IMR-90 (cell line): ENCODE measurements at regions of chr11 and their contacts with region 1.

Region 1: DNA sequence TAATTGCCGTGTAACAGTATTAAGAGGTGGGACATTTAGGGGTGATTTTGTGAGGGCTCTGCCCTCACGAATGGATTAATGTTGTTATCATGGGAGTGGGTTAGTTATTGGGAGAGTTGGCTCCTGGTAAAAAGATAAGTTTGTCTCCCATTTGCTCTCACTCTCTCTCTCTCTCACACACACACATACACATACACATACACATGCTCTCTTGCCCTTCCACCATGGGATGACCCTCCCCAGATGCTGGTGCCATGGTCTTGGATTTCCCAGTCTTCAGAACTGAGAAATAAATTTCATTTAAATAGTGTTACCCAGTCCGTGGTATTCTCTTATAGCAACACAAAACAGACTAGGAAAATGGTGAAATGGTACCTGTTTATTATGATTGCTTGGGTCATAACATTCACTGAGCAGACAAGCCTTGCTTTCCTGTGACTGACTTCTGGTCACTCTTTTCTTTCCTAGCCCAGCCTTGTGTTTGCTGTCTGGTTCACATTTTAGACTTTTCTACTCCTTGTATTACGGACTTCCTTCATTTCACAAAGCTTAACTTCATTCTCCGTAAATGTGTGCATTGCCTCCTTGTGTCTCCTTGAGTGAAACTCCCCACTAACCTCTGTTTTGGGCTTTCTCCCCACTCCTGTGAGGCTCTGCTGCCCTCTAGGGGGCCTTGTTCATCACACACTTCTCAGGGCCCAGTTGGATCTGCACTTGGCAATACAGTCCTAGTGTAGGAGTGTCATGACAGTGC is 206.5 kb upstream of the CTSC start:
- DNase-seq: peak; percentile 91
- ATAC-seq: peak; percentile 100
- H3K4me3 ChIP-seq: no peak overlapping the region
- H3K27ac ChIP-seq: peak overlapping the region; percentile 28; the same call in 1 of the 2 replicates
- H3K4me1 ChIP-seq: peaks cover 2% of the 10 kb centered on the region; the same call in 1 of the 2 replicates
- H3K27me3 ChIP-seq: no peaks in the 10 kb centered on the region
- CTCF ChIP-seq: peak; percentile 100; the same call in 1 of the 2 replicates
- POLR2A ChIP-seq: peak; percentile 62; the same call in 1 of the 2 replicates
- RAD21 ChIP-seq: peak; percentile 100

Region 2: GRCh38 chr11:87463486-87464102 is 1080.5 kb before region 1 on chr11:
- CTCF ChIA-PET with region 1: no interaction called
- POLR2A ChIA-PET with region 1: no interaction called
- dilution Hi-C with region 1: no loop called
- in situ Hi-C with region 1: no loop called
- intact Hi-C with region 1: loop called (anchors 10 kb)
- DNase-seq: peak; percentile 36
- ATAC-seq: 0 out of 2 replicates have a peak, but pooled peaks have one; percentile 51
- H3K4me3 ChIP-seq: no peak overlapping the region
- H3K27ac ChIP-seq: no peak overlapping the region
- H3K4me1 ChIP-seq: no peaks in the 10 kb centered on the region
- H3K27me3 ChIP-seq: no peaks in the 10 kb centered on the region
- CTCF ChIP-seq: peak; percentile 47
- POLR2A ChIP-seq: no peak
- RAD21 ChIP-seq: peak; percentile 60

Region 3: DNA sequence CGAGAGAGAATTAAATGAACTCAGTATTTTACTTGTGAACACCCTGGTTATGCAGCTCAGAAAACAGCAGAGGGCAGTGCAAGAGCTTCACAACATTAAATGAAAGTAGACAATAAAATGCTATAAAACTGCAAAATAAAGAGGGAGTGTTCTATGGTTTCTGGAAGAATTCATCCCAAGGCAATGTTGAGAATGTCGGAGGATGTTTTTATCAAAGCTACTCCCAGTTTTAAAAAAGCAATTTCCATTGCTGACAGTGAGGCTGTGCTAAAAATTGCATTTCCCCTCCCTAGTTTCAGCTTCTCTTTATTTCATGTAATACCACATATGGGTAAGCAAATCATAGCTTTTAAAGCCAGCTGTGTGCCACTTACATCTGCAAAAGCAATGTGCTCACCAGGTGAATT is 665.7 kb before region 1 on chr11:
- CTCF ChIA-PET with region 1: interaction called, 5 read pairs
- POLR2A ChIA-PET with region 1: no interaction called
- dilution Hi-C with region 1: no loop called
- in situ Hi-C with region 1: no loop called
- intact Hi-C with region 1: loop called (anchors 1 kb)
- DNase-seq: peak; percentile 57
- ATAC-seq: peak; percentile 72
- H3K4me3 ChIP-seq: no peak overlapping the region
- H3K27ac ChIP-seq: no peak overlapping the region
- H3K4me1 ChIP-seq: no peaks in the 10 kb centered on the region
- H3K27me3 ChIP-seq: no peaks in the 10 kb centered on the region
- CTCF ChIP-seq: peak; percentile 58
- POLR2A ChIP-seq: no peak
- RAD21 ChIP-seq: peak; percentile 57

Region 4: GRCh38 chr11:88103337-88104206 is 440.5 kb before region 1 on chr11:
- CTCF ChIA-PET with region 1: interaction called, 4 read pairs
- POLR2A ChIA-PET with region 1: no interaction called
- dilution Hi-C with region 1: no loop called
- in situ Hi-C with region 1: no loop called
- intact Hi-C with region 1: loop called (anchors 1 kb)
- DNase-seq: peak; percentile 58
- ATAC-seq: peak; percentile 61
- H3K4me3 ChIP-seq: no peak overlapping the region
- H3K27ac ChIP-seq: no peak overlapping the region
- H3K4me1 ChIP-seq: no peaks in the 10 kb centered on the region
- H3K27me3 ChIP-seq: no peaks in the 10 kb centered on the region
- CTCF ChIP-seq: peak; percentile 56
- POLR2A ChIP-seq: no peak
- RAD21 ChIP-seq: peak; percentile 48; the same call in 1 of the 2 replicates

Region 5: GRCh38 chr11:88231894-88232482 is 312.1 kb before region 1 on chr11:
- CTCF ChIA-PET with region 1: interaction called, 3 read pairs
- POLR2A ChIA-PET with region 1: no interaction called
- dilution Hi-C with region 1: no loop called
- in situ Hi-C with region 1: no loop called
- intact Hi-C with region 1: loop called (anchors 1 kb)
- DNase-seq: peak; percentile 40
- ATAC-seq: peak; percentile 84
- H3K4me3 ChIP-seq: no peak overlapping the region
- H3K27ac ChIP-seq: no peak overlapping the region
- H3K4me1 ChIP-seq: no peaks in the 10 kb centered on the region
- H3K27me3 ChIP-seq: no peaks in the 10 kb centered on the region
- CTCF ChIP-seq: peak; percentile 56
- POLR2A ChIP-seq: no peak
- RAD21 ChIP-seq: peak; percentile 61

Region 6: GRCh38 chr11:88337181-88337986 is 206.7 kb before region 1 on chr11 and contains the start of gene CTSC:
- CTCF ChIA-PET with region 1: no interaction called
- POLR2A ChIA-PET with region 1: interaction called, 3 read pairs
- dilution Hi-C with region 1: no loop called
- in situ Hi-C with region 1: no loop called
- intact Hi-C with region 1: loop called (anchors 1 kb)
- DNase-seq: peak; percentile 87
- ATAC-seq: peak; percentile 90
- H3K4me3 ChIP-seq: peak within 1 kb of the TSS; percentile 96
- H3K27ac ChIP-seq: peak within 1 kb of the TSS; percentile 98
- H3K4me1 ChIP-seq: peaks cover 2% of the 10 kb centered on the region
- H3K27me3 ChIP-seq: no peaks in the 10 kb centered on the region
- CTCF ChIP-seq: peak; percentile 23; the same call in 1 of the 2 replicates
- POLR2A ChIP-seq: peak; percentile 83
- RAD21 ChIP-seq: peak; percentile 11
- total RNA-seq, gene CTSC: 178 and 208 TPM in 2 replicates

Region 7: GRCh38 chr11:88353835-88354496 is 190.1 kb before region 1 on chr11:
- CTCF ChIA-PET with region 1: no interaction called
- POLR2A ChIA-PET with region 1: no interaction called
- dilution Hi-C with region 1: no loop called
- in situ Hi-C with region 1: no loop called
- intact Hi-C with region 1: no loop called
- DNase-seq: no peak
- ATAC-seq: peak; percentile 34; the same call in 1 of the 2 replicates
- H3K4me3 ChIP-seq: no peak overlapping the region
- H3K27ac ChIP-seq: peak overlapping the region; percentile 49; the same call in 1 of the 2 replicates
- H3K4me1 ChIP-seq: peaks cover 4% of the 10 kb centered on the region
- H3K27me3 ChIP-seq: no peaks in the 10 kb centered on the region
- CTCF ChIP-seq: no peak
- POLR2A ChIP-seq: no peak
- RAD21 ChIP-seq: no peak

Region 8: DNA sequence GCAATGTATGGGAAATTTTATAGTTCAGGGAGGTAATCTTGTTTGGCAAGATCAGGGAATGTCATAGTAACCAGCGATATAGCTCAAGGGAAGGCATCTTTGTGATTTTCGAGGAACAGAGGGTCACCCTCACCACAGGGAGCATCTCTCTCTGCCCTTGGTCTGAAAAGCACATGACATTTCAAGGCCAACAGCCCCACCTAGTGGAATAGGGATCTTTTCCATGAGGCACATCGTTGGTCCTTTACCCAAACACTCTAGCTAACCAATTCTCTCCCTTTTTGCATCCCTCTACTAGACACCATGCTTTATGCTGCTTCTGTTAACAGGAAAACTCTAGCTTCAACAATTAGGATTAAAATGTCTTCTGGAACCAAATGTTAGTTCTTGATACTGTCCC is 342.7 kb after region 1 on chr11:
- CTCF ChIA-PET with region 1: no interaction called
- POLR2A ChIA-PET with region 1: no interaction called
- dilution Hi-C with region 1: no loop called
- in situ Hi-C with region 1: no loop called
- intact Hi-C with region 1: loop called (anchors 2 kb)
- DNase-seq: peak; percentile 46
- ATAC-seq: peak; percentile 62; the same call in 1 of the 2 replicates
- H3K4me3 ChIP-seq: no peak overlapping the region
- H3K27ac ChIP-seq: no peak overlapping the region
- H3K4me1 ChIP-seq: no peaks in the 10 kb centered on the region
- H3K27me3 ChIP-seq: no peaks in the 10 kb centered on the region
- CTCF ChIP-seq: peak; percentile 57
- POLR2A ChIP-seq: no peak
- RAD21 ChIP-seq: peak; percentile 68